ENCODE measurements at regions of chr2 and their contacts with region 1.

Region 1: DNA sequence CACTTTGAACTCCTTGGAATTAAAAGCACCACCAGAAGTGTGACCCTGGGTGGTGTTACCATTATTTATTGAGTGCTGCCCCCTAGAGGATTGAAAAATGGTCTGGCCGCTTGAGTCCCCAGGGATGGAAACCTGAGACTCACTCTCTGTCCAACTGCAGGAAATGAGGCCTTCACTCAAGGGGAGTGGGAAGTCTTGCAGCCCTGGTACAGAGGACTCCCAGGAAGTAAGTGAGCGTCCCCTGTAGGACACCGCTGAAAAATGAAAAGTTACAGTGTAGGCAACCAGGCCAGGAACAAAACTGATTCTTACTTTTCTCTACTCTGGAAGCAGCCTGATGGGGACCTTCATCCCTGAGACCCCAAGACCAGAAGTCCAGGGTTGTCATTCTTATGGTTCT is 2.2 kb upstream of the NRP2 start:
- DNase-seq: peak; percentile 44
- H3K4me3 Mint-ChIP-seq: peak overlapping the region; percentile 43
- H3K27ac Mint-ChIP-seq: peak overlapping the region; percentile 22
- H3K4me1 Mint-ChIP-seq: peaks cover 45% of the 10 kb centered on the region
- H3K27me3 Mint-ChIP-seq: peaks cover 39% of the 10 kb centered on the region

Region 2: DNA sequence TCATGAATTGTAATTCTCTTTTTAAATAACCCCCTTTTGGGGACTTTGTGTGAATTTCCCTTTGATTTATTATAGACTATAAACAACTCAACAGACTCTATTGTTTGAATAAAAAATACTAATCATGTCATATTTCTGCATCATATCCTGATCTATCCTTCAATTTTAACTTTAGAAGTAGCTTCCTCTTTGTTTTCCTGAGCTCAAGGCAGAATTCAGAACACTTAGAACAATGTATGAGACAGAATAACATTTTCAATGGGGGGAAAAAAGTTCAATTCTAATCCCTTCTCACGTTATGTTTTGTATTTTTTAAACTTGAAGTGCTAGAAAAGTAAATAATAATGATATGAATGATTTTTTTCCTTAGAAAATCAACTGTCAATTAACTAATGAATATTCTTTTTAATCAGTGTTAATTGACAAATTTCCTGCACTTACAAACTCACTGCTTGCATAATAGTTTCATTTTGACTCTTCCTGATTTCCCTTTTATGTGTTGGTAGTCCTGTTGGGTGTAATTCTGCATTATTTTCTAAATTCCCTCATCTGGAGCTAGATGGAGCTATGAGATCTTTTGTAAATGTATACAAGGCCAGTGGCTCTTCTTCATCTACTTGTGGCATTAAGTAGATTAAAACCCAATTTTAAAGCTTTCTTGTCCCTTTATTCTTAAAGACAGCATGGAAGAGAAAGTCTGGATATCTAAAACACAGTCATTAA is 808.7 kb before region 1 on chr2:
- intact Hi-C with region 1: loop called (anchors 1 kb)
- DNase-seq: no peak
- H3K4me3 Mint-ChIP-seq: no peak overlapping the region
- H3K27ac Mint-ChIP-seq: no peak overlapping the region
- H3K4me1 Mint-ChIP-seq: peaks cover 36% of the 10 kb centered on the region
- H3K27me3 Mint-ChIP-seq: peaks cover 17% of the 10 kb centered on the region

Region 3: GRCh38 chr2:205077159-205077558 is 602.9 kb before region 1 on chr2:
- intact Hi-C with region 1: loop called (anchors 5 kb)
- DNase-seq: peak; percentile 2
- H3K4me3 Mint-ChIP-seq: peak overlapping the region; percentile 28
- H3K27ac Mint-ChIP-seq: peak overlapping the region; percentile 11
- H3K4me1 Mint-ChIP-seq: peaks cover 35% of the 10 kb centered on the region
- H3K27me3 Mint-ChIP-seq: no peaks in the 10 kb centered on the region

Region 4: DNA sequence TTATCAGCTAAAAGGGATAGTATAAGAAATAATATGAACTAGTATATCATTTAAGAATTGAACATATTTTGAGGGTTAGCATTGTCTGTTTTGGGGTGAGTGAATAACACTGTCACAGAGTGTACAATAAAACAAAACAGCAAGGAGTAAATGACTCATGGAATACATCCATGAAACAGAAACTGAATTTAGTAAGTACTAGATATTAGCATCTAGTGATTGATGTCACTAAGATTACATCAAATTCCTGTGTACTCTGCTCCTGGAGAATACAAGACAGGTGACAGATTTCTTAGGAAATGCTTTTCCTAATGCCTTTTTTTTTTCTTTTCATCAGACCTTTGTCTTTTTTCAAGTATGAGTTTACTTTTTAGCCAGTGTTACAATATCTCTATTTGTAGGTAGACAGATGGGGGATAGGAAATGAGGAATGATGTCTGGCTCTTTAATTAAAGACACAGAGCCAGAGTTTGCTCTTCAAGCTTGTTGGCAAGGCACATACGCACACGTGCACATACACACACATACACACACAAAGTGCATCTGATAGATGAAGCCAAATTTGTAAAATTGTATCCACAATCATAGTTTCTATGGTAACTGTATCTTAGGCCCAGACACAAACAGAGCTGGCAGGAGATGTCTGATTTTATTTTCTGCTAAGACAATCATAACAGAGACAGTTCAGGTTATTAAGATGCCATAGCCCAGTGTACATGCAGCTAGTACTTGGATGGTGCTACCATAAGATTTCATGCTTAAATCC is 135.9 kb before region 1 on chr2:
- intact Hi-C with region 1: loop called (anchors 5 kb)
- DNase-seq: no peak
- H3K4me3 Mint-ChIP-seq: no peak overlapping the region
- H3K27ac Mint-ChIP-seq: peak overlapping the region; percentile 44
- H3K4me1 Mint-ChIP-seq: peaks cover 21% of the 10 kb centered on the region
- H3K27me3 Mint-ChIP-seq: peaks cover 3% of the 10 kb centered on the region

Region 5: GRCh38 chr2:205700331-205701132 is 20.5 kb after region 1 on chr2:
- intact Hi-C with region 1: loop called (anchors 1 kb)
- DNase-seq: no peak
- H3K4me3 Mint-ChIP-seq: peak overlapping the region; percentile 35
- H3K27ac Mint-ChIP-seq: peak overlapping the region; percentile 92
- H3K4me1 Mint-ChIP-seq: peaks cover 37% of the 10 kb centered on the region
- H3K27me3 Mint-ChIP-seq: no peaks in the 10 kb centered on the region

Region 6: DNA sequence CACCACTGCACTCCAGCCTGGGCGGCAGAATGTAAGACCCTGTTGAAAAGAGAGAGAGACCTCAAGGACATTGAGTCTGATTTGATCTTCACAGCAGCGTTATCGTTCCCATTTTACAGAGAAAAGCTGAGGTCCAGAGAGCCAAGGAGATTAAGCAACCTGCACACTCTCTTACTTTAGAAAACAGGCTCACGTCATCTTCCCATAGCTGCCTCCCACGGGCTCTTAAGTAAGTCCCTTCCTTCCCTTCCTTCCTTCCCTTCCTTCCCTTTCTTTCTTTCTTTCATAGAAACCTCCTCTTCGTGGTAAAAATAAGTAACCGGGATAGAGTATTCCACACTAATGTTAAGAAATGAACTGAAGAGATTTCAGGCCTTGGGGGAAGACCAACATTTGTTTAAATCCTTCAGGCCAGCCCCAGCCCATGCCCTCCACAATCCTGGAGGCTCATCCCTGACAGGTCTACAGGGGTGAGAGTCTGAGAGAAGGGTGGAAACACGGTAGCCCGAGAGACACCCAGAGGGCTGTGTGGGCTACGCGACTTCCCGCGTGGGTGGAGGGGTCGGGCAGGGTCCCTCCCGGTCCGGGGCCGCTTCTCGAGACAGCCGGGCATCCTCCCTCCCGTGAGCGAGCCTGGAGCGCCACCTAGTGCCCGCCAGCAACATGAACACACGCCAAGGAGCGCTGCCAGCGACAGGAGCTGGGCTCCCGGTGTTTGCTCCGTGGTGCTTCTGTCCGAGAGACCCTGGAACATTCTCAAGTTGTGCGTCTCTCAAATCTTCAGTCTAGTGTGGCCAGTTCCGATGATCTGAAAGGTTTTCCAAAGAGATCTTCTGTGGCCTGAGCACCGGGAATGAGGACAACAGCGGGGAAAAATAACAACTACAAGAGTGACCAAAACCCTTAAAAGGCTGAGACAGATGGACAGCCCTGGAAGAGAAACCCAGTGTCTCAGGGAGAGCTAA is 245.6 kb after region 1 on chr2:
- intact Hi-C with region 1: loop called (anchors 5 kb)
- DNase-seq: peak; percentile 46
- H3K4me3 Mint-ChIP-seq: peak overlapping the region; percentile 4
- H3K27ac Mint-ChIP-seq: no peak overlapping the region
- H3K4me1 Mint-ChIP-seq: peaks cover 14% of the 10 kb centered on the region
- H3K27me3 Mint-ChIP-seq: peaks cover 30% of the 10 kb centered on the region